ENCODE measurements at regions of chr11 and their contacts with region 1.

Region 1: GRCh38 chr11:20609727-20610707 is 10.6 kb downstream of the SLC6A5 start:
- DNase-seq: peak; percentile 71 to 80 (median 75)
- ATAC-seq: peak; percentile 91
- H3K4me3 ChIP-seq: no peak overlapping the region
- H3K27ac ChIP-seq: no peak overlapping the region
- H3K4me1 ChIP-seq: peaks cover 8% of the 10 kb centered on the region
- H3K27me3 ChIP-seq: peaks cover 0 to 9% of the 10 kb centered on the region in 2 donors
- CTCF ChIP-seq: peak; percentile 87 to 97 (median 91)
- POLR2A ChIP-seq: no peak

Region 2: GRCh38 chr11:20397281-20397680 is 212.7 kb before region 1 on chr11:
- intact Hi-C with region 1: loop called (anchors 10 kb)
- DNase-seq: peak in 1 of 4 donors; percentile 38
- ATAC-seq: no peak
- H3K4me3 ChIP-seq: no peak overlapping the region
- H3K27ac ChIP-seq: no peak overlapping the region
- H3K4me1 ChIP-seq: no peaks in the 10 kb centered on the region
- H3K27me3 ChIP-seq: no peaks in the 10 kb centered on the region
- CTCF ChIP-seq: peak; percentile 9 to 50 (median 37)
- POLR2A ChIP-seq: no peak

Measured in body of pancreas (tissue), 4 donors.